ENCODE measurements at regions of chr11 and their contacts with region 1.

Region 1: DNA sequence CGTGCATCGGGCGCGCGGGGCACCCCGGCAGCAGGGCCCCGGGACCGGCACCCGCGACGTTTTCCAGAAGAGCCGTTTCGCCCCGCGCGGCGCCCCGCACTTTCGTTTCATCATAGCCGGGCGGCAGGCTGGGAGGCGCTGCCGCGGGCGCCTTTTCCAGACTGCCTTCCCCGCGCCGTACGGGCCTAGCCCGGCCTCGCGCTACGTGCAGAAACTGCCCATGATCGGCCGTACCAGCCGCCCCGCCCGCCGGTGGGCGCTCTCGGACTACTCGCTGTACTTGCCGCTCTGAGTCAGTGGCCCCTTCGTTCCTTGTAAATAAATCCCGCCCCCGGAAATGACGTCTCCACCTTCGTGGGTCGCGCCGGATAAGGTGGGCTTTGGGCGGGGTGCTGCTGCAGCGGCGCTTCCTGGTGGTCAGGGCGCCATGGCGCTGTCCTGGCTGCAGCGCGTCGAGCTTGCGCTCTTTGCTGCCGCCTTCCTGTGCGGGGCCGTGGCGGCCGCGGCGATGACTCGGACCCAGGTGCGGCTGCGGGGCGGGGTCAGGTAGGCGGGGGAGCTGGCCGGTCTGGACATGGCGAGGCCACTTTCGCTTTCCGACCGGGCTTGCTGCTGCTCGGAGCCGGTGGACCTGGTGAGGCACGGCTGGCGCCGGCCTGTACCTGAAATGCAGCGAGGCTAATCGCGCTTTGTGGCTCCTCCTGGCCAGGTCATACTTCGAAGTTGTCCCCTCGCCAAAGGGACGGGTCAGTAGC is at the start of gene TMEM179B:
- DNase-seq: peak; percentile 99
- ATAC-seq: peak; percentile 88
- total RNA-seq, gene TMEM179B: 21.6 TPM

Region 2: GRCh38 chr11:62771144-62772021 is 15.8 kb before region 1 on chr11 and contains the start of gene TAF6L:
- intact Hi-C with region 1: loop called (anchors 1 kb)
- DNase-seq: peak; percentile 99
- ATAC-seq: peak; percentile 98
- total RNA-seq, gene TAF6L: 8.2 TPM

Region 3: GRCh38 chr11:62831520-62832335 is 44.5 kb after region 1 on chr11 and contains the start of gene STX5:
- intact Hi-C with region 1: loop called (anchors 5 kb)
- DNase-seq: peak; percentile 100
- ATAC-seq: peak; percentile 99
- total RNA-seq, gene STX5: 18.5 TPM

Region 4: DNA sequence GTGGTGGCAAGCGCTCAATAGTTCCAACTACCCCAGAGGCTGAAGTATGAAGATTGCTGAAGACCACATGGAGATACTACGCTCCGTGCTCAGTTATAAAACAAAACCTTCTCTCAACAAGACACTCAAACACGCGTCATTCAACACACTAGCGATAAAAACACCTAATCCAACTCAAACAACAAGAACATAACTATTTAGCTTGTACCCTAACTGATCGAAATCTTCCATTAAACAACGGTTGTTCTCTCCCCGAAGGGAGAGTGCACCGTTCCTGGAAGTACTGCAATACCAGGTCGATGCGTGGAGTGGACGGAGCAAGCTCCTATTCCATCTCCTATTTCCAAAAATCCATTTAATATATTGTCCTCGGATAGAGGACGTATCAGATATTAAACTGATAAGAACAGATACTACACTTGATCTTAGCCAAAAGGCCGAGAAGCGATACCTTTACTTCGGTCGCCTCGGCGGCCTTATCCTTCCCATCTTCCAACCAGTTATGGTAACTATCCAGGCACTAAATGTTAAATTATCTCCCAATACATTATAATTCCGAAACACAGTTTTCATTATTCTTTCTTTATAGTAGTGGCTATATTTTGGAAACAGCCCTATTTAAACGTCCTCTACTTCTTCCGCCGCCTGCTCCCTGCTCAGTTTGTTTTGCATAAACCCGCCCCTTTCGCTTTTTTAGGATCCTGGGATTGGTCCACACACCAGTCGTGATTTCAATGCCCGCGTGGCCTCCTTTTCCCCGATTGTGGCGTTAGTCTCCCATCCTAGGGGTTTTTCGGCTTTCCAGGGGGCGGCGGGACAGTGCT is 54.4 kb after region 1 on chr11:
- intact Hi-C with region 1: loop called (anchors 2 kb)
- DNase-seq: peak; percentile 90
- ATAC-seq: peak; percentile 79

Measured in Right ventricle myocardium inferior (tissue), 1 donor.